H1 (cell line): ENCODE measurements at regions of chr5 and their contacts with region 1.

Region 1: DNA sequence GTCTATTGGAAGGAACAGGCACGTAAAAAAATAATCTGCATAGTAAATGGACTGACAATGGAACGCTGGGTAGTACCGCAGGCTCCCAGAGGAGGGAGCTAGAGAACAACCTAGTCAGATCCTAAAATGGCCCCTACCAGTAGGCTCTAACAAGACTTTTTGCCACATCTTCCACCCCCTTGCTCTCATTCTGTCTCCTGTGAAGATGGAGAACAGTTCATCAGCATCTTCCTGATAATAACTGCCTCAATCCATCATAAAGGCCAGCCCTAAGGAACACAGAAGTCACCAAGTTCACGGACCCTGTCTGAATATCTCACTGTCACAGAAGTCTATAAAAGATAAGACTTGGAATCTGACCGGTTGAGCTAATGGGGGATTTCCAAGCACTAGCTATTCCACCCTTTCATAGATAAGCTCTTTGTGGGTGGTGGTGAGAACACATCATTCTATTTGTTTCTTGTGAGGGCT is 133.4 kb downstream of the SLC1A3 start:
- DNase-seq: peak; percentile 68 to 95
- H3K4me3 ChIP-seq: no peak overlapping the region
- H3K27ac ChIP-seq: no peak overlapping the region
- H3K4me1 ChIP-seq: peaks cover 7 to 10% (median 9%) of the 10 kb centered on the region in 4 experiments; a peak in 6 of 7 replicates
- H3K27me3 ChIP-seq: no peaks in the 10 kb centered on the region
- CTCF ChIP-seq: peak; percentile 46 to 95 (median 91)
- EP300 ChIP-seq: no peak
- POLR2A ChIP-seq: no peak
- RAD21 ChIP-seq: peak; percentile 83 to 88

Region 2: DNA sequence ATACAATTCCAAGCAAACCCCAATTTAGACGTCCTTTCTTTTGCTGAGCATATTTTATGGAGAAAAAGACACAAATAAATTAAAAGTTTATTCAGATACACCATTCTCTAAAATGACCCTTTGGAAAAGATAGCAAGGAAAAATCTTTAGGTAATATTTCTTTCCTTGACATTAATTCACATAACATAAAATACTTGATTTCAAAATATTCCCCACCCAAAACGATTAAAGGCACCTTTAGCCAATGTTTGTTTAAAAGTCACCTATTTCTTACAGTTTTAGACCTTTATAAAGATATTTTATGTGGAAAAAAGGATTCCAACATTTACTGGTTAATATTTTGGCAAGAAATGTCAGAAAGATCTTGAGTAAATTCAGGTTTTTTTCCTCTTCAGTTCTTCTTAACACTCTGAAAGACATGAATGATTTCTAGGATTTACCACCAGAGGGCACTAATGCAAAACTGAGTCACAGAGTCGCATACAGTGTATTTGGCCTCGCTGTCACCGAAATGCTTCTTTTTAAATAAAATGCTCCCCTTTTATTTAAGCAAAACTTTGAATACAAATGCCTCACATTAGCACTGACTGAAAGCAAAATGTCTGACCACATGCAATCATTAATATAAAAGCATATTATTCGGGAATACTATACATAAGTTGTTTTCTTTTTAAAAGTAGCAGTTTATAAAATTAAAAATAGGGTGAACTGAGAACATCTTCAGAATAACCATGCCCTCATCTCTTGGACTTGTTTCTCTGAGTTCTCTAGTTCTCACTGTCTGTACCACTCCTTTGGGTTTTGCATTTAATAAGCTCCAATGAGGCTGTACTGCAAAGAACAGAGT is 10.9 kb before region 1 on chr5:
- CTCF ChIA-PET with region 1: interaction called, 34 read pairs
- POLR2A ChIA-PET with region 1: interaction called, 7 read pairs
- DNase-seq: no peak
- H3K4me3 ChIP-seq: no peak overlapping the region
- H3K27ac ChIP-seq: no peak overlapping the region
- H3K4me1 ChIP-seq: peaks cover 0 to 3% (median 0%) of the 10 kb centered on the region in 4 experiments; a peak in 3 of 7 replicates
- H3K27me3 ChIP-seq: no peaks in the 10 kb centered on the region
- CTCF ChIP-seq: peak in 2 of 3 experiments; percentile 51 to 63; a peak in 2 of 4 replicates
- EP300 ChIP-seq: no peak
- POLR2A ChIP-seq: no peak
- RAD21 ChIP-seq: peak; percentile 59 to 61

Region 3: GRCh38 chr5:36769129-36769770 is 29.5 kb after region 1 on chr5:
- CTCF ChIA-PET with region 1: interaction called, 19 read pairs
- POLR2A ChIA-PET with region 1: interaction called, 5 read pairs
- DNase-seq: no peak
- H3K4me3 ChIP-seq: no peak overlapping the region
- H3K27ac ChIP-seq: no peak overlapping the region
- H3K4me1 ChIP-seq: no peaks in the 10 kb centered on the region
- H3K27me3 ChIP-seq: no peaks in the 10 kb centered on the region
- CTCF ChIP-seq: no peak
- EP300 ChIP-seq: no peak
- POLR2A ChIP-seq: no peak
- RAD21 ChIP-seq: no peak

Region 4: DNA sequence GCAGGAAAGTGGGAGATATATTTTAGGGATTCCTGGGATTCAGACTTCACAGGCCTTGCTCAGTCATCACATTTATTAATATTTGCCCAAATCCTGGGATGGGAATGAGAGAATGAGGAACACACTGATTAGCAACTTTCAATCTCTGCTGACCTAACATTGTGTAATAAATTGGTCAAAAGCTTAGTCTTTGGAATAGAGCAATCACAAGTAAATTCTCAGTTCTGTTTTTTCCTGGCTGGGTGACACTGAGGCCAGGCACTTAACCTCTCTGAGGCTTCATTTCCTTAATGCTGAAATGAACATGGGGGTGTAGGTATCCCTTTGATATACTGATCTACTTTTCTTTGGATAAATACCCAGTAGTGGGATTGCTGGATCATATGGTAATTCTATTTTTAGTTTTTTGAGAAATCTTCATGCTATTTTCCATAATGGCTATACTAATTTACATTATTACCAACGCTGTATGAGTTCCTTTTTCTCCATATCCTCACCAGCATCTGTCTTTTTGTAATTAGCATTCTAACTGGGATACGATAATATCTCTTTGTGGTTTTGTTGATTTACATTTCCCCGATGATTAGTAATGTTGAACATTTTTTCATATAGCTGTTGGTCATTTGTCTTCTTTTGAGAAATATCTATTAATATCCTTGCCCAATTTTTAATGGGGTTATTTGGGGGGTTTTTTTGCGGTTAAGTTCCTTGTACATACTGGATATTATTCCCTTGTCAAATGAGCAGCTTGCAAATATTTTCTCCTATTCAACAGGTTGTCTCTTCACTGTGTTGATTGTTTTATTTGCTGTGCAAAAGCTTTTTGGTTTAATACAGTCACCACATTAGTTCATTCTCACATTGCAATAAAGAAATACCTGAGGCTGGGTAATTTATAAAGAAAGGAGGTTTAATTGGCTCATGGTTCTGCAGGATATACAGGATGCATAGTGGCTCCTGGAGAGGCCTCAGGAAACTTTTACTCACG is 100.0 kb after region 1 on chr5:
- CTCF ChIA-PET with region 1: interaction called, 11 read pairs
- POLR2A ChIA-PET with region 1: interaction called, 4 read pairs
- DNase-seq: no peak
- H3K4me3 ChIP-seq: no peak overlapping the region
- H3K27ac ChIP-seq: no peak overlapping the region
- H3K4me1 ChIP-seq: no peaks in the 10 kb centered on the region; a peak in 1 of 7 replicates
- H3K27me3 ChIP-seq: no peaks in the 10 kb centered on the region
- CTCF ChIP-seq: no peak
- EP300 ChIP-seq: no peak
- POLR2A ChIP-seq: no peak
- RAD21 ChIP-seq: no peak

Region 5: DNA sequence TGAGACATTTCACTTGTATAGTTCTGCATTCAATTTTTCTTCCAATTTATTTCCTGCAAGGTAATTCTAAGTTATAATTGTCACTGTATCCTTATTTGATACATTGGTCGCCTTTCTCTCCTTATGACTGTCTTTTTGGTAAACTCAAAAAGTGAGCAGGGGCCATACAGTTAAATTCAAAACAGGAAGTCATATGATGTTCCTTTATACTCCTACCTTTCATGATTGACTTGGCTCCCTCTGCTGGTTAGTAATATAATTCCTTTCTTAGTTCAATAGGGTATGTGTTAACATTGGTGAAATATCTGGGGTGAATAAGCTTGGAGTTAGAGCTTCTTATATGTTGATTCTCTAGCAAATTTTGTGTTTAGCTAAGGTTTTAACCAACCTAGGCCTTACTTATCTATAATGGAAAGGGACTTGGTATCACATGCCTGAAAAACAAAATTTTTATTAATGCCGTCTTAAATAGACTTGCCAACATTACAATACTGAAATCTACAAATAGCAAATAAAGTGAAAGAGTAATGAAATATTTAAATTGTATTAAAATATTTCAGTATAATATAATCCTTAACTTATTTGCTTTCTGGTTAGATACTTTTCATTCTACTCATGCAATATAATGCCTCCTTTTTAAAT is 130.7 kb after region 1 on chr5:
- CTCF ChIA-PET with region 1: interaction called, 121 read pairs
- POLR2A ChIA-PET with region 1: interaction called, 27 read pairs
- DNase-seq: no peak
- H3K4me3 ChIP-seq: no peak overlapping the region
- H3K27ac ChIP-seq: no peak overlapping the region
- H3K4me1 ChIP-seq: peaks cover 0 to 4% (median 0%) of the 10 kb centered on the region in 4 experiments; a peak in 4 of 7 replicates
- H3K27me3 ChIP-seq: no peaks in the 10 kb centered on the region
- CTCF ChIP-seq: peak in 2 of 3 experiments; percentile 36 to 57; a peak in 2 of 4 replicates
- EP300 ChIP-seq: no peak
- POLR2A ChIP-seq: no peak
- RAD21 ChIP-seq: peak; percentile 52 to 59

Region 6: DNA sequence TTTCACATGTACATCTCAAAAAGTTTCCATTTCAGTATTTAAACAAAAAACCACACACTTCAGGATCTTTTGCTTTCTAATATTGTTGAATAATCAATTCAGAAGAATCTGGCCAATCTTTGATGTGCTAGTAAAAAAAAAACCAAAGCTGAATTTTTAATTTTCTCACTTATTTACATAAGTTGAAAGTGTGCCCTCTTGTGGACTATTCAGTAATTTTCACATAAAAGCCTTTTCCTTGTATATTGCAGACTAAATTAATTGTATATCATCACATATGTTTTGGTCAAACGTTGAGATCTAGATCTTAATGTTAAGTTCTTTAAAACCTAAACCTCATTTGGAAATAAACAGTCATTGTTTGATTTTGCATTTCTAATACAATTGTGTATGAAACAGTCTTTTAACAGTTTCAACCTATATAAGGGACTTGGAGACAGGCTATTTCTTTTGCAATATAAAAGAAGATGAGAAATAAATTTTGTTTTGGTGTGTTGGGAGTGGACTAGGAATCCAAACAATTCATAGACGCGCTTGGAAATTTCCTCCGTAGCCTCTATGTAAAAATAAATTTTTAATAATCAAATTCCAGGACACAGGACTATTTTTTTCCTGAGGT is 204.9 kb after region 1 on chr5:
- CTCF ChIA-PET with region 1: interaction called, 17 read pairs
- POLR2A ChIA-PET with region 1: no interaction called
- DNase-seq: no peak
- H3K4me3 ChIP-seq: no peak overlapping the region
- H3K27ac ChIP-seq: no peak overlapping the region
- H3K4me1 ChIP-seq: no peaks in the 10 kb centered on the region
- H3K27me3 ChIP-seq: no peaks in the 10 kb centered on the region
- CTCF ChIP-seq: peak in 1 of 3 experiments; percentile 31; a peak in 2 of 4 replicates
- EP300 ChIP-seq: no peak
- POLR2A ChIP-seq: no peak
- RAD21 ChIP-seq: no peak